ENCODE measurements at regions of chr3 and their contacts with region 1.

Region 1: GRCh38 chr3:188362405-188362831 is 208.5 kb downstream of the LPP start:
- DNase-seq: peak; percentile 66
- H3K4me3 Mint-ChIP-seq: peak overlapping the region; percentile 0
- H3K27ac Mint-ChIP-seq: peak overlapping the region; percentile 23
- H3K4me1 Mint-ChIP-seq: peaks cover 44% of the 10 kb centered on the region
- H3K27me3 Mint-ChIP-seq: no peaks in the 10 kb centered on the region
- CTCF ChIP-seq: no peak

Region 2: GRCh38 chr3:188432802-188433520 is 70.5 kb after region 1 on chr3:
- CTCF ChIA-PET with region 1: interaction called, 4 read pairs
- intact Hi-C with region 1: loop called (anchors 5 kb)
- DNase-seq: peak; percentile 34
- H3K4me3 Mint-ChIP-seq: peak overlapping the region; percentile 37
- H3K27ac Mint-ChIP-seq: peak overlapping the region; percentile 49
- H3K4me1 Mint-ChIP-seq: peaks cover 66% of the 10 kb centered on the region
- H3K27me3 Mint-ChIP-seq: no peaks in the 10 kb centered on the region
- CTCF ChIP-seq: no peak

Measured in Calu3 (cell line).